ENCODE measurements at regions of chr6 and their contacts with region 1.

Region 1: GRCh38 chr6:99467509-99468106 is 42.5 kb upstream of the PNISR start:
- DNase-seq: peak; percentile 44
- CTCF ChIP-seq: peak; percentile 61

Region 2: GRCh38 chr6:99305021-99305554 is 162.5 kb before region 1 on chr6:
- in situ Hi-C with region 1: no loop called
- DNase-seq: no peak
- CTCF ChIP-seq: no peak

Region 3: GRCh38 chr6:99746261-99746895 is 278.8 kb after region 1 on chr6:
- in situ Hi-C with region 1: loop called (anchors 25 kb)
- DNase-seq: peak; percentile 43
- CTCF ChIP-seq: peak; percentile 73